ENCODE measurements at regions of chr7 and their contacts with region 1.

Region 1: GRCh38 chr7:33895025-33895804 is 10.1 kb upstream of the BMPER start:
- DNase-seq: no peak
- ATAC-seq: peak; percentile 99
- H3K4me3 ChIP-seq: no peak overlapping the region
- H3K27ac ChIP-seq: no peak overlapping the region
- H3K4me1 ChIP-seq: no peaks in the 10 kb centered on the region
- H3K27me3 ChIP-seq: 0 out of 4 replicates have a peak, but pooled peaks cover 2 to 7% of the 10 kb centered on the region in 2 experiments
- CTCF ChIP-seq: peak; percentile 72 to 90 (median 87)
- EP300 ChIP-seq: no peak
- POLR2A ChIP-seq: no peak
- RAD21 ChIP-seq: peak; percentile 64

Region 2: GRCh38 chr7:33185786-33186185 is 709.4 kb before region 1 on chr7:
- CTCF ChIA-PET with region 1: interaction called, 5 read pairs
- POLR2A ChIA-PET with region 1: no interaction called
- RAD21 ChIA-PET with region 1: no interaction called
- SMC1A ChIA-PET with region 1: interaction called, 3 read pairs
- in situ Hi-C with region 1: no loop called
- intact Hi-C with region 1: loop called (anchors 2 kb)
- DNase-seq: no peak
- ATAC-seq: peak; percentile 84
- H3K4me3 ChIP-seq: no peak overlapping the region
- H3K27ac ChIP-seq: no peak overlapping the region
- H3K4me1 ChIP-seq: no peaks in the 10 kb centered on the region
- H3K27me3 ChIP-seq: no peaks in the 10 kb centered on the region
- CTCF ChIP-seq: peak; percentile 51 to 85 (median 66); a peak in 4 of 6 replicates
- EP300 ChIP-seq: no peak
- POLR2A ChIP-seq: no peak
- RAD21 ChIP-seq: peak; percentile 80

Region 3: GRCh38 chr7:33757562-33758165 is 137.6 kb before region 1 on chr7:
- CTCF ChIA-PET with region 1: interaction called, 13 read pairs
- POLR2A ChIA-PET with region 1: no interaction called
- RAD21 ChIA-PET with region 1: no interaction called
- SMC1A ChIA-PET with region 1: interaction called, 4 read pairs
- in situ Hi-C with region 1: no loop called
- intact Hi-C with region 1: loop called (anchors 1 kb)
- DNase-seq: no peak
- ATAC-seq: peak; percentile 31; the same call in 1 of the 3 replicates
- H3K4me3 ChIP-seq: no peak overlapping the region
- H3K27ac ChIP-seq: no peak overlapping the region
- H3K4me1 ChIP-seq: no peaks in the 10 kb centered on the region; the same call in 1 of the 2 replicates
- H3K27me3 ChIP-seq: peaks cover 0 to 1% of the 10 kb centered on the region in 2 experiments; a peak in 1 of 4 replicates
- CTCF ChIP-seq: peak; percentile 45 to 50 (median 49); a peak in 5 of 6 replicates
- EP300 ChIP-seq: no peak
- POLR2A ChIP-seq: no peak
- RAD21 ChIP-seq: peak; percentile 52

Region 4: GRCh38 chr7:33909318-33909717 is 14.1 kb after region 1 on chr7:
- CTCF ChIA-PET with region 1: interaction called, 11 read pairs
- POLR2A ChIA-PET with region 1: no interaction called
- RAD21 ChIA-PET with region 1: interaction called, 3 read pairs
- SMC1A ChIA-PET with region 1: no interaction called
- in situ Hi-C with region 1: no loop called
- intact Hi-C with region 1: no loop called
- DNase-seq: no peak
- ATAC-seq: no peak
- H3K4me3 ChIP-seq: no peak overlapping the region
- H3K27ac ChIP-seq: no peak overlapping the region
- H3K4me1 ChIP-seq: no peaks in the 10 kb centered on the region
- H3K27me3 ChIP-seq: peaks cover 3 to 5% of the 10 kb centered on the region in 2 experiments; a peak in 3 of 4 replicates
- CTCF ChIP-seq: no peak
- EP300 ChIP-seq: no peak
- POLR2A ChIP-seq: no peak
- RAD21 ChIP-seq: no peak

Region 5: GRCh38 chr7:34759452-34760125 is 864.4 kb after region 1 on chr7:
- CTCF ChIA-PET with region 1: no interaction called
- POLR2A ChIA-PET with region 1: no interaction called
- RAD21 ChIA-PET with region 1: no interaction called
- SMC1A ChIA-PET with region 1: no interaction called
- in situ Hi-C with region 1: no loop called
- intact Hi-C with region 1: no loop called
- DNase-seq: no peak
- ATAC-seq: no peak
- H3K4me3 ChIP-seq: no peak overlapping the region
- H3K27ac ChIP-seq: no peak overlapping the region
- H3K4me1 ChIP-seq: no peaks in the 10 kb centered on the region
- H3K27me3 ChIP-seq: no peaks in the 10 kb centered on the region
- CTCF ChIP-seq: peak; percentile 55 to 57 (median 56); a peak in 5 of 6 replicates
- EP300 ChIP-seq: no peak
- POLR2A ChIP-seq: no peak
- RAD21 ChIP-seq: peak; percentile 32; the same call in 1 of the 2 replicates